MCF 10A (cell line): ENCODE measurements at regions of chr14 and their contacts with region 1.

Region 1: GRCh38 chr14:76876076-76876475 is 49.9 kb downstream of the LRRC74A start:
- DNase-seq: peak; percentile 75
- H3K4me3 Mint-ChIP-seq: no peak overlapping the region
- H3K27ac Mint-ChIP-seq: no peak overlapping the region
- H3K4me1 Mint-ChIP-seq: no peaks in the 10 kb centered on the region
- H3K27me3 Mint-ChIP-seq: peaks cover 1% of the 10 kb centered on the region
- CTCF ChIP-seq: peak; percentile 95

Region 2: GRCh38 chr14:76856769-76857168 is 19.3 kb before region 1 on chr14:
- CTCF ChIA-PET with region 1: interaction called, 18 read pairs
- POLR2A ChIA-PET with region 1: no interaction called
- intact Hi-C with region 1: no loop called
- DNase-seq: no peak
- H3K4me3 Mint-ChIP-seq: no peak overlapping the region
- H3K27ac Mint-ChIP-seq: no peak overlapping the region
- H3K4me1 Mint-ChIP-seq: no peaks in the 10 kb centered on the region
- H3K27me3 Mint-ChIP-seq: peaks cover 70% of the 10 kb centered on the region
- CTCF ChIP-seq: no peak

Region 3: GRCh38 chr14:76904740-76905438 is 28.8 kb after region 1 on chr14:
- CTCF ChIA-PET with region 1: interaction called, 186 read pairs
- POLR2A ChIA-PET with region 1: interaction called, 3 read pairs
- intact Hi-C with region 1: no loop called
- DNase-seq: peak; percentile 99
- H3K4me3 Mint-ChIP-seq: peak overlapping the region; percentile 55
- H3K27ac Mint-ChIP-seq: peak overlapping the region; percentile 57
- H3K4me1 Mint-ChIP-seq: peaks cover 29% of the 10 kb centered on the region
- H3K27me3 Mint-ChIP-seq: no peaks in the 10 kb centered on the region
- CTCF ChIP-seq: no peak

Region 4: DNA sequence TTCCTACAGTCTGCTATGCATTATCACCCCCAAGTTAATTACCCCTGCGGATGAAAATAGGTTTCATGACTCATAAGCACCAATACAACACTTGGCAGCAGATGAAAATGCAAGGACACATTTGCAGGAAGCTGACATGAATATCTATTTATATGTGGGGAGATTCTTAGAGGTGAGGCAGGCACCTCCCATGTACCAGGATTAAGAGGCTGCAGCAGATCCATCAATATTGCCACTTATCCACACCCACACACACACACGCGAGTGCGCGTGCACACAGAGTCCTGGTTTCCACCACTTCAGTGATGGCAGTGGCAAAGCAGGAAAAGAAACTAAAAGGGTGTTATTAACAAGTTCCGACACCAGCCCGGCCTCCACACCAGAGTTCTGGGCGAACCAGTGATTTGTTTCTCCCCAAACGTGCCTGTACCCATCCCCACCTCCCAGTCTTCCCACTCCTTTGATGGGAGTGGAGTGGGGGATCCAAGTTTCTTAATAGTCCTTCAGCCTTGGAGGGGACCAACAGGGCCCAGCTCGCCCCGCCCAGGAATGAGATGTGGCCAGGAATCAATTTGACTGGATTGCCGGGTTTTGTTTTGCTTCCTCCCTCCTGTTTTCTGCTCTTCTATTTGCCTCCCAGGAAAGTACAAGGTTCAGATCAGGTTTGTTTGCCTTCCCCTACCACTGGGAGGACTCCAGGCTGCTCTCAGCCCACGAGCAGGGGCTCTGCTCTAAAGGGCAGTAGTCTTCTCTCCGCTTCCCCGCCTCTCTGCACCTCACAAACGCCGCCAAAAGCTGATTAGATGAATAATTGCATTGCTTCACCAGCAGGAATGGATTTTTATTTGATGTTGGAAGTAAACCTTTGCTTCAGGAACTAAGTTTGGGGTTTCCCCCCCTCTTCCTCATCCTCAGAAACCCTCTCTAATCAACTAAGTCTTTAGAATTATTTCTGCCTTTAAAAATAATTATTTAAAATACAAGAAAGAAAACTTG is 147.2 kb after region 1 on chr14:
- CTCF ChIA-PET with region 1: interaction called, 15 read pairs
- POLR2A ChIA-PET with region 1: interaction called, 4 read pairs
- intact Hi-C with region 1: no loop called
- DNase-seq: peak; percentile 52
- H3K4me3 Mint-ChIP-seq: peak overlapping the region; percentile 81
- H3K27ac Mint-ChIP-seq: no peak overlapping the region
- H3K4me1 Mint-ChIP-seq: peaks cover 23% of the 10 kb centered on the region
- H3K27me3 Mint-ChIP-seq: no peaks in the 10 kb centered on the region
- CTCF ChIP-seq: peak; percentile 6

Region 5: DNA sequence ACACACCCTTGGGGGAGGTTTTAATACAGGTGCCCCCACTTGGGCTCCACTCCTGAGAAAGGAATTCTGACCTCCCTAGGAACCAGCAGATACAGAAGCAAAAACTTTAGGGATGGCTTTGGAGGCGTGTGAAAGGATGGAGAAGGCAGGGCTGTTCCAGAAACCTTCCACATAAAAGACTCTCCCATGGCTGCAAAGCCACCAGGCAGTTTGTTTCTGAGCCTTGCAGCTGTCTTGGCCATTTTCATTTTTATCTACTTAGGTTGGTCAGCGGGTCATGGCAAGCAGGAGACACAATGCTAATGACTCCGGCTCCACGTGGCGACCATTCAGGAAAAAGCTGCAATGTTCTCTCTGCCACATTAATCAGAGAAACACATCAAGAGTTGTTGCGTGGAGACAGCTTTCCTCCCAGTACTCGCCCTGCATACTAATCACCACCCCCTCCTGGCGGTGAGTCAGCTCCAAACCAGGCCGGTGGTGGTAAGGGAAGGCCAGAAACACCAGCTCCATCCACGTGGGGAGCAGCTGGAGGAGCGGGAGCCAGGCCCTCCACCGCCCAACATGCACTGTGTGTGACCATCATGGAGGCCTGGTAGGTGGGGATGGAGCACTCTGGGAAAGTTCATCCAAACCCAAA is 183.3 kb after region 1 on chr14:
- CTCF ChIA-PET with region 1: interaction called, 76 read pairs
- POLR2A ChIA-PET with region 1: interaction called, 3 read pairs
- intact Hi-C with region 1: no loop called
- DNase-seq: peak; percentile 83
- H3K4me3 Mint-ChIP-seq: no peak overlapping the region
- H3K27ac Mint-ChIP-seq: peak overlapping the region; percentile 78
- H3K4me1 Mint-ChIP-seq: peaks cover 12% of the 10 kb centered on the region
- H3K27me3 Mint-ChIP-seq: no peaks in the 10 kb centered on the region
- CTCF ChIP-seq: peak; percentile 15

Region 6: GRCh38 chr14:77097700-77098528 is 221.8 kb after region 1 on chr14 and contains the start of gene CIPC:
- CTCF ChIA-PET with region 1: interaction called, 338 read pairs
- POLR2A ChIA-PET with region 1: interaction called, 8 read pairs
- intact Hi-C with region 1: loop called (anchors 1 kb)
- DNase-seq: peak; percentile 99
- H3K4me3 Mint-ChIP-seq: peak within 1 kb of the TSS; percentile 98
- H3K27ac Mint-ChIP-seq: peak within 1 kb of the TSS; percentile 99
- H3K4me1 Mint-ChIP-seq: peaks cover 43% of the 10 kb centered on the region
- H3K27me3 Mint-ChIP-seq: no peaks in the 10 kb centered on the region
- CTCF ChIP-seq: no peak
- total RNA-seq, gene CIPC: 9.7 and 11.4 TPM in 2 replicates

Region 7: DNA sequence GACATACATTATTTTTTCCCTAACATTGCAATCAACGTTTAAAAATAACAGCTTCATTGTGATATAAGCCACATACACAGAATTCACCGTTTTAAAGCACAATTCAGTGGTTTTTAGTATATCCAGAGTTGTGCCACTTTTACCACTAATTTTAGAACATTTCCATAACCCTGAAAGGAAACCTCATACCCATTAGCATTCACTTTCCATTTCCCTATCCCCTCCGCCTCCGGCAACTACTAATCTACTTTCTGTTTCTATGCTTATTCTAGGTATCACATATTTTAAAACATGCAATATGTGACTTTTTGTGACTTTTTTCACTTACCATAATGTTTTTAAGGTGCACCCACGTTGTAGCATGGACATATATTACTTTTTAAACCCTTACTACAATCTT is 678.1 kb after region 1 on chr14:
- CTCF ChIA-PET with region 1: interaction called, 3 read pairs
- POLR2A ChIA-PET with region 1: no interaction called
- intact Hi-C with region 1: loop called (anchors 5 kb)
- DNase-seq: no peak
- H3K4me3 Mint-ChIP-seq: no peak overlapping the region
- H3K27ac Mint-ChIP-seq: no peak overlapping the region
- H3K4me1 Mint-ChIP-seq: no peaks in the 10 kb centered on the region
- H3K27me3 Mint-ChIP-seq: no peaks in the 10 kb centered on the region
- CTCF ChIP-seq: no peak

Region 8: DNA sequence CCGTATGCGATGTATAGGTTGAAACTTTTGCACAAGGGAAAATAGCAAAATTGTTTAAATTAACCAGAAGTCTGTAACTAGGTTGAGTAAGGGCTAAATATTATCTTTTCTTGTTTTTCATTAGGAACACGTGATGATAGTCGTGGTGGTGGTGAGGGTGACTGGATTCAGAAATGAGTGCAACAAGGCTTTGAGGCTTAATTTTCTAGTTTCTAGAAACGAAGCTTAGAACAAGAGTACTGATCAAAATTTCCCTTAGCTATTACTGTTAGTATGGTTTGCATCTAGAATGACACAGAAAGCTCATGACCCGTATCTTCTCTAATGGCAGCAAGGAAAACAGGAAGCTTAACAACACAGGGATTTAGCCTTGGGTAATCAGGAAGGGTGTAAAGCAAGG is 838.9 kb after region 1 on chr14:
- CTCF ChIA-PET with region 1: no interaction called
- POLR2A ChIA-PET with region 1: no interaction called
- intact Hi-C with region 1: no loop called
- DNase-seq: no peak
- H3K4me3 Mint-ChIP-seq: no peak overlapping the region
- H3K27ac Mint-ChIP-seq: no peak overlapping the region
- H3K4me1 Mint-ChIP-seq: peaks cover 5% of the 10 kb centered on the region
- H3K27me3 Mint-ChIP-seq: no peaks in the 10 kb centered on the region
- CTCF ChIP-seq: no peak